ENCODE measurements at regions of chr12 and their contacts with region 1.

Region 1: GRCh38 chr12:114209861-114210260 is 196.1 kb downstream of the TBX5 start:
- DNase-seq: no peak
- H3K4me3 ChIP-seq: no peak overlapping the region
- H3K27ac ChIP-seq: no peak overlapping the region
- H3K4me1 ChIP-seq: peaks cover 0 to 3% (median 0%) of the 10 kb centered on the region in 4 experiments; a peak in 1 of 7 replicates
- H3K27me3 ChIP-seq: peaks cover 0 to 1% (median 0%) of the 10 kb centered on the region in 4 experiments; a peak in 1 of 7 replicates
- CTCF ChIP-seq: no peak
- EP300 ChIP-seq: no peak
- POLR2A ChIP-seq: no peak
- RAD21 ChIP-seq: no peak

Region 2: DNA sequence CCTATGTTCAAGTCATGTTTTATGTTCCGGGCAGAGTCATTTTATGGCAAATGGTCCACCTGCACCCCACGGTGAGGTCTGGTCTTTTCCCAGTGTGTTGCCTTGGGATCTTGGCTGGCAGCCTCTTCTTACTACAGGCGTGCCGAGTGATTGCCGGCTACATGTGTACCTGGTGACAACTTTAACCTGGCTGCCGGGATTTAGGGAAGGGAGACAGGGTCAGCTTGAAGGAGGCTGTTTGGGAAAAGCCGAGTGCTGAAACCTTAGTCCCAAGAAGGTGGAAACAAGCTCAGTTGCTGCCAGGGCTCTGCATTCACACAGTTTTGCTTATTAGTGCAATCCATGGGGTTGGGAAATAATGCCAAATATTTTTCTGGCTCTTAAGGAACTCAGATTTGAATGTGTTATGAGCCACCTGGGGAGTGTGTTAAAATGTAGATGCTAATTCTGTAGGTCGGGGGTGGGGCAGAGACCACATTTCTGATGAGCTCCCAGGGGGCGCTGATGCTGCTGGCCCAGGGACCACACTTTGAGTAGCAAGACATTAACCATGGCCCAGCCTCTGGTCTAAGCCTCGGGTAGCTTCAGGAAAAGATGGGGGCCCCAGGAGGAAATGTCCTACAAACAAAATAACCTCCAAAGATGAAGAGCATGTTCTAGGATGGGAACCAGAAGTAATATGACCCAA is 16.5 kb after region 1 on chr12:
- CTCF ChIA-PET with region 1: interaction called, 10 read pairs
- POLR2A ChIA-PET with region 1: no interaction called
- DNase-seq: peak in 1 of 2 experiments; percentile 52
- H3K4me3 ChIP-seq: no peak overlapping the region
- H3K27ac ChIP-seq: no peak overlapping the region
- H3K4me1 ChIP-seq: peaks cover 0 to 16% (median 3%) of the 10 kb centered on the region in 4 experiments; a peak in 4 of 7 replicates
- H3K27me3 ChIP-seq: no peaks in the 10 kb centered on the region; a peak in 1 of 7 replicates
- CTCF ChIP-seq: peak; percentile 37 to 47 (median 42)
- EP300 ChIP-seq: no peak
- POLR2A ChIP-seq: no peak
- RAD21 ChIP-seq: peak in 1 of 2 experiments; percentile 53; a peak in 2 of 4 replicates

Measured in H1 (cell line).